Panc1 (cell line): ENCODE measurements at regions of chr12 and their contacts with region 1.

Region 1: GRCh38 chr12:34606749-34607519 is 584.6 kb downstream of the ALG10 start:
- DNase-seq: no peak
- ATAC-seq: no peak
- H3K4me3 ChIP-seq: no peak overlapping the region
- H3K27ac ChIP-seq: no peak overlapping the region
- H3K4me1 ChIP-seq: no peaks in the 10 kb centered on the region
- H3K27me3 ChIP-seq: peaks cover 2% of the 10 kb centered on the region; the same call in 1 of the 2 replicates
- CTCF ChIP-seq: no peak

Region 2: DNA sequence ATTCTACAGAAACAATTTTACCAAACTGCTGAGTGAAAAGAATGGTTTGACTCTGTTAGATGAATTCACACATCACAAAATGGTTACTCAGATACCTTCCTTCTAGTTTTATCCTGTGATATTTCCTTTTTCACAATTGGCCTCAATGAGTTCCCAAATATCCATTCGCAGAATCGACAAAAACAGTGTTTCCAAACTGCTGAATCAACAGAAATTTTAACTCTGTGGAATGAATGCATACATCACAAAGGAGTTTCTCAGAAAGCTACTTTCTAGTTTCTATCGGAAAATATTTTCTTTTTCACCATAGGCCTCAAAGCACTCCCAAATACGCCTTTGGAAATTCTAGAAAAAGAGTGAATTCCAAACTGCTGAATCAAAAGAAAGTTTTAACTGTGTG is 59.7 kb before region 1 on chr12:
- CTCF ChIA-PET with region 1: no interaction called
- POLR2A ChIA-PET with region 1: no interaction called
- in situ Hi-C with region 1: no loop called
- intact Hi-C with region 1: loop called (anchors 10 kb)
- DNase-seq: no peak
- ATAC-seq: no peak
- H3K4me3 ChIP-seq: no peak overlapping the region
- H3K27ac ChIP-seq: no peak overlapping the region
- H3K4me1 ChIP-seq: no peaks in the 10 kb centered on the region
- H3K27me3 ChIP-seq: no peaks in the 10 kb centered on the region
- CTCF ChIP-seq: no peak

Region 3: DNA sequence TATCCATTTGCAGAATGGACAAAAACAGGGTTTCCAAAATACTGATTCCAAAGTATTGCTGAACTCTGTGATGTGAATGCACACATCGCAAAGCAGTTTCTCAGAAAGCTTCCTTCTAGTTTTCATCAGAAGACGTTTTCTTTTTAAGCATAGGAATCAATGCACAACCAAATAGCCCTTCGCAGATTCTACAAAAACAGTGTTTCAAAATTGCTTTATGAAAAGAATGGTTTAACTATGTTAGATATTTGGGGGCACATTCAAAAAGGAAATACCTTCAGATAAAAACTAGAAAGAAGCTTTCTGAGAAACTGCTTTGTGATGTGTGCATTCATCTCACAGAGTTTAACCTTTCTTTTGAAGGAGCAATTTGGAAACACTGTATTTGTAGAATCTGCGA is 15.0 kb before region 1 on chr12:
- CTCF ChIA-PET with region 1: no interaction called
- POLR2A ChIA-PET with region 1: no interaction called
- in situ Hi-C with region 1: no loop called
- intact Hi-C with region 1: no loop called
- DNase-seq: no peak
- ATAC-seq: no peak
- H3K4me3 ChIP-seq: no peak overlapping the region
- H3K27ac ChIP-seq: no peak overlapping the region
- H3K4me1 ChIP-seq: no peaks in the 10 kb centered on the region
- H3K27me3 ChIP-seq: no peaks in the 10 kb centered on the region
- CTCF ChIP-seq: no peak